ENCODE measurements at regions of chr10 and their contacts with region 1.

Region 1: DNA sequence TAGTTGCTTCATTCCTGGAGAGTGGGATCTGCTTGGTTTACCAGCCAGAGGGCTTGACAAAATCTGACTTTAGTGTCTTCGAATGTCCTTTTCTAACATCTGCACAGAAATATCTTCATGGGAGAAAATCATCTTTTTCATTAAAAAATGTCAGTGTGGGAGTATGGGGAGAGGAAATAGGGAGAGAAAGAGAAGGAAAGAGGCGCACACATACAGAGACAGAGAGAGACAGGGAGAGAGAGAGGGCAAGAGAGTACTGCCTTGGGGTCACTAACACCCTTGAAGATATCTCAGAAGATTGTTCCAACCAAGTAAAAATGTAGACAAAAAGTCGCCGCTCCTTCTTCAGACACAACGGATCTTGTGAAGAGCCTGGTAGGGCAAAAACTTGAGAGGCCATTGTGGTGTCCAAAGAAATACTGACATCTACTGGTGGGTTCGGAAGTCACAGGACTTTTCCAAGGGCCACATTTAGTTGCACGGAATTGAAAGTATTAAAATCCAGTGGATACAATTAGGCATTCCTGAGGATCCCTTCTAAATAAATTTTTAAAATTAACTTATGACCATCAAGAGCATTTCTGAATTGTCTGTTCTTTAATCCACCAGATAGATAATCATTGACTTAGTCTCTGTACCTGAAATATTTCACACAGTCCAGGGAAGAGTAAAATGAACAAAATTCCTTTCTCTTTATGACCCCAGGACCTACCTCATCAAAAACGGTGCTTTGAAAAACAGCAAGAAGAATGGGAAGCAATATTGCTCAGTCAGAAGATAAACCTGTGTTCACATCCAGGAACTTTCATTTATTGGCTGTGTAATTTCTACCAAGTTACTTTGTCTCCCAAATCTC is 29.7 kb downstream of the VIM start:
- DNase-seq: peak; percentile 58
- H3K4me3 Mint-ChIP-seq: peak overlapping the region; percentile 5
- H3K27ac Mint-ChIP-seq: no peak overlapping the region
- H3K4me1 Mint-ChIP-seq: peaks cover 5% of the 10 kb centered on the region
- H3K27me3 Mint-ChIP-seq: no peaks in the 10 kb centered on the region

Region 2: DNA sequence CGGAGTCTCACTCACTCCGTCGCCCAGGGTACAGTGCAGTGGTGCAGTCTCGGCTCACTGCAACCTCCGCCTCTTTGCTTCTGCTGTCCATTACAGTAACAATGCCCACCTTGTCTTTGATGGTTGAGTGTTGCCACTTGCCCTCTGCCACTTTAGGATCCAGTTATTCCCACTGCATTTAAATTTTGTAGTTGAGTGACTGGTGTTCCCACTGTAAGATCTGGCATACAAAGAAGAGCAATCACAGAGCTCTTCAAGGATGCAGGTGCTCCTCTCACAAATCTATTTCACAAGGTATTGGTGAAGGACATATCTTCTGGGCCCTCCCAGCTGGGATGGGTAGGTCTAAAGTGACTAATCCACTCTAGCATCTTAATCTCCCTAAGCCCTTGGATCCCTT is 808.2 kb before region 1 on chr10:
- CTCF ChIA-PET with region 1: no interaction called
- POLR2A ChIA-PET with region 1: no interaction called
- intact Hi-C with region 1: no loop called
- DNase-seq: no peak
- H3K4me3 Mint-ChIP-seq: no peak overlapping the region
- H3K27ac Mint-ChIP-seq: no peak overlapping the region
- H3K4me1 Mint-ChIP-seq: peaks cover 4% of the 10 kb centered on the region
- H3K27me3 Mint-ChIP-seq: no peaks in the 10 kb centered on the region

Region 3: GRCh38 chr10:16828114-16828568 is 429.6 kb before region 1 on chr10:
- CTCF ChIA-PET with region 1: interaction called, 13 read pairs
- POLR2A ChIA-PET with region 1: no interaction called
- intact Hi-C with region 1: loop called (anchors 1 kb)
- DNase-seq: peak; percentile 61
- H3K4me3 Mint-ChIP-seq: no peak overlapping the region
- H3K27ac Mint-ChIP-seq: no peak overlapping the region
- H3K4me1 Mint-ChIP-seq: no peaks in the 10 kb centered on the region
- H3K27me3 Mint-ChIP-seq: no peaks in the 10 kb centered on the region

Region 4: GRCh38 chr10:16843252-16843870 is 414.3 kb before region 1 on chr10:
- CTCF ChIA-PET with region 1: interaction called, 15 read pairs
- POLR2A ChIA-PET with region 1: no interaction called
- intact Hi-C with region 1: loop called (anchors 1 kb)
- DNase-seq: no peak
- H3K4me3 Mint-ChIP-seq: no peak overlapping the region
- H3K27ac Mint-ChIP-seq: no peak overlapping the region
- H3K4me1 Mint-ChIP-seq: peaks cover 4% of the 10 kb centered on the region
- H3K27me3 Mint-ChIP-seq: no peaks in the 10 kb centered on the region

Region 5: DNA sequence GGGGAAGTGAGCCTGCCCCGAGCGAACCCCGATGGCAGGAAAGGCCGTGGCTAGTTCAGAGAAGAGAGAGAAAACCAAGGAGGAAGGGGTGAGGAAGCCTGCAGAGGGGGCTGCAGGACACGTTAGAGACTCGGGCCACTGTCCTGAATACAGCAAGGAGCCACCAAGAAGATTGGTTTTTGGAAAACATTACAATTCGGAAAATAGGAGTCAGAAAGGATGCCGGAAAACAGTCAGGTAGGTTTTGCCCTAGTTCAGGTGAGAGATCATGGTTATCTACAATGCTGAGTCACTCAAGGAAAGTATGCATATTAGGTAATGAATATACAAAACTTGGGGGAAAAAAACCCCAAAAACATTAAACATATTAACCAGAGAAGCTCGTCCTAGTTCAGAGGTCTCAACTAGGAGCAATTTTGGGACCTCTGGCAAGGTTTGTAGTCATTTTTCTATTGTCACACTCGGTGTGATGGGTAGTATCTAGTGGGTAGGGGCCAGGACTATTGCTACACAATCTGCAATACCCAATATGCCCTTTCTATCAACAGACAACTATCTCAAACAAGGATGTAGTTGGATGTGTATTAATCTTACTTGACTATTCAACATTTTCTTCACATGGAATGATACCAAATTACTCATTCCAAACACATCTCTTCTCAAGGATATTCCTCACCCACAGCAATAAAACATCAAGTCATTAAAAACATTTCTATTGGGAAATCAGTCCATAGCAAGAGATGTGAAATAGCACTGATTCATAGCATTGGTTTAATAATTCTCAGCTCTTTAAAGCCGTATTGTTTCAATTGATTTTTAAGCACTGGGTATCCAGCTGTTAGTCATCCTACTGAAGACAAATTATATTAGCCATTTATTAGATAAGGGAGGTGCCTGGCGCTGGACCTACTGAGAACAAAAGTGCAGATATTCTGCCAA is 366.1 kb before region 1 on chr10:
- CTCF ChIA-PET with region 1: no interaction called
- POLR2A ChIA-PET with region 1: no interaction called
- intact Hi-C with region 1: loop called (anchors 1 kb)
- DNase-seq: peak; percentile 69
- H3K4me3 Mint-ChIP-seq: peak overlapping the region; percentile 65
- H3K27ac Mint-ChIP-seq: peak overlapping the region; percentile 63
- H3K4me1 Mint-ChIP-seq: peaks cover 11% of the 10 kb centered on the region
- H3K27me3 Mint-ChIP-seq: no peaks in the 10 kb centered on the region

Region 6: DNA sequence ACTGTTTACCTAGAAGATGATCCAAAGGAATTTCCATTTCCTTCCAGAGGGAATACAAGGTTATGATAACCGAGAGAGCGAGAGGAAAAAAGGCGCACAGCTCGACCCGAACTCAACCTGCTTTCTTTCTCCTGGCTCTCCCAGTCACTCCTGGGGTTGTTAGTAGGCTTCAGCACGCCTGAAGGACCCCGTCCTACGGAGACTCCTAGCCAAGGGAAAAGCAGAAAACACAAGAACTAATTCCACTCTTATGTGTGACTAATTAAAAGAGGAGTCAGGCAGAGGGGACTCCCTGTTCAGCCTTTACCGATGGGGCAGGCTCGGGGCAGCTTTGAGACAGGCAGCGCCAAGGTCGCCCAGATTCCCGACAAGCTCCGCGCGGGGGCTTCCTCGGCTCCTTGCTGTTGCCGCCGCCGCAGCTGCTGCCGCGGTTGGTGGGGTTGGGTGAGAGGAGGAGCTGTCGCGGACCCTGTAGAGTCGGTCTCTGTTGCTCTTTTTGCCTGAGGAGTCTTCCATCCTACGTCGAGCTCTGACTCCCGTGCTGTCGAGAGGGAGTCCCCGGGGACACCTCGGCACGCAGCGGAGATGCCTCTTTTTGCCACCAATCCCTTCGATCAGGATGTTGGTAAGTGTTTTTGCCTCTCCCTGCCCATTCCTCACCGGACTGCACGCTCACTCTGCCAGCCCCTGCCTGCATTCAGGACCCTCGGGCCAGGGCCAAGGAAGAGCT is 386.2 kb after region 1 on chr10 and contains the start of gene STAM:
- CTCF ChIA-PET with region 1: no interaction called
- POLR2A ChIA-PET with region 1: no interaction called
- intact Hi-C with region 1: no loop called
- DNase-seq: peak; percentile 94
- H3K4me3 Mint-ChIP-seq: peak within 1 kb of the TSS; percentile 95
- H3K27ac Mint-ChIP-seq: peak within 1 kb of the TSS; percentile 99
- H3K4me1 Mint-ChIP-seq: peaks cover 53% of the 10 kb centered on the region
- H3K27me3 Mint-ChIP-seq: no peaks in the 10 kb centered on the region
- total RNA-seq, gene STAM: 24.5 to 29.9 TPM